T-cell (primary cell): ENCODE measurements at regions of chr15 and their contacts with region 1.

Region 1: DNA sequence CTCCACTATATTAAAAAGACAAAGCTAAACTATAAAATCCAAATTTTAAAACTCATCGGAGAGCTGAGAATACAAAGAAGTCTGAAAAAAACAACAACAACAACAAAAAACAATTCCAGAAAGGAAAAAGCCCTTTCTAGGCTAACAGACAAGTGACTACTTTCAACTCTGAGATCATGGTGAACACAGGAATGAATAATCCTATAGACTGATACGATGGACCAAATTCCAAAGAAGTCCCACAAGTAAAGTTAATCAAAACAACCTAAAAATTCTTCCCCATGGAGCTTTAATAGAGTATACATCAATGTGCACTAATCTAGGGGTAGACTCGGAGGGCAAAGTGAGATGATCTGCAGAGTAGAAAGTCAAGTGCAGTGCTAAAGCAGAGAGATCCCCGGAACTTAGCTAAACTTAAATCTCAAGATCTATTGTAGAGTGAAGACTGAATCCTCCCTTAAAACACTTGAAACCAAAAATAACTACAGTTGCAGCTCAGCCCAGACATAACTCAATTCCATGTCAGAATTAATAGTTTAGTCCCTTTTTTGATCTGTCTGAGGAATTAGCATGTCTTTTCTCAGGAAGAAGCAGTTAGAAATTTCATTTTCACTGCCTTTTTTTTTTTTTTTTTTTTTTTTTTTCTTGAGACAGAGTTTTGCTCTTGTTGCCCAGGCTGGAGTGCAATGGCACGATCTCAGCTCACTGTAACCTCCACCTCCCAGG is 43.5 kb downstream of the MYO9A start:
- DNase-seq: no peak
- ATAC-seq: no peak
- H3K4me3 ChIP-seq: no peak overlapping the region
- H3K4me3 Mint-ChIP-seq: no peak overlapping the region
- H3K27ac ChIP-seq: no peak overlapping the region
- H3K27ac Mint-ChIP-seq: no peak overlapping the region
- H3K4me1 ChIP-seq: no peaks in the 10 kb centered on the region
- H3K4me1 Mint-ChIP-seq: peaks cover 33 to 60% (median 39%) of the 10 kb centered on the region in 3 donors
- H3K27me3 ChIP-seq: no peaks in the 10 kb centered on the region
- H3K27me3 Mint-ChIP-seq: no peaks in the 10 kb centered on the region

Region 2: DNA sequence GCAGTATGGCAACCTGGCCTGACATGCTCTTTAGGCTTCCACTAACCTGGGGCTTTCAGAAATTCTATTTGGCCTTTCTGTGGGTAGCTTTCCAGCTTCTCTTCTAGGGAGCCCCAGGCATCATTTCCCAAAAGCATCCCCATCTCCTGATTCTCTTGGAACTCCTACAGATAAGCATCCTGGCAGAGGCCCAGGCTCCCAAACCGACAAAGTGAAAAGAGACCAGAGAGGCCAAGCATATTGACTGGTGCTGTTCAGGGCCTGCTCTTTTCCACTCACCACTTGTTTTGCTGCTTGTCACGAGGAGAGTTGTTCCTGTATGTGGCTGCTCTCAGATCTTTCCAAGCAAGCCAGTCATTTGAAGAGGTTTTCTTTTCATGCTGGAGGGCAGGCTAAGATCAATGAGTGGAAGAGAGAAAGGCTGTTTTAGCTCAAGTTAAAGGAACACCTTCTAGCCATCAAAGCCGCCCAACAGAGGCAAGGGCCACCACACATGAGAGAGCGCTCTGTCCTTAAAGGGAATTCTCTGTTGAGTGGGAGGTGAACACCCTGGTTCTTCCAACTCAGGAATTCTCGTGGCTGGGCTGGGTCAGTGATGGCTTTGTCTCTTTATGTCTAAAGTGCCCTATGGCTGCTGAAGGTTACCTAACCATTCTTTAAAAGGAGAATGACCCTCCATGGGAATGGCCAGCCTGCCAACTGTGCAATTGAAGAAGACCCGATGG is 295.3 kb before region 1 on chr15:
- CTCF ChIA-PET with region 1: interaction called in 1 of 2 experiments, 15 read pairs
- POLR2A ChIA-PET with region 1: no interaction called
- DNase-seq: no peak
- ATAC-seq: no peak
- H3K4me3 ChIP-seq: no peak overlapping the region
- H3K4me3 Mint-ChIP-seq: no peak overlapping the region
- H3K27ac ChIP-seq: no peak overlapping the region
- H3K27ac Mint-ChIP-seq: no peak overlapping the region
- H3K4me1 ChIP-seq: no peaks in the 10 kb centered on the region
- H3K4me1 Mint-ChIP-seq: peaks cover 0 to 6% (median 3%) of the 10 kb centered on the region in 3 donors
- H3K27me3 ChIP-seq: peaks cover 0 to 14% of the 10 kb centered on the region in 2 experiments
- H3K27me3 Mint-ChIP-seq: peaks cover 0 to 21% of the 10 kb centered on the region in 2 donors

Region 3: DNA sequence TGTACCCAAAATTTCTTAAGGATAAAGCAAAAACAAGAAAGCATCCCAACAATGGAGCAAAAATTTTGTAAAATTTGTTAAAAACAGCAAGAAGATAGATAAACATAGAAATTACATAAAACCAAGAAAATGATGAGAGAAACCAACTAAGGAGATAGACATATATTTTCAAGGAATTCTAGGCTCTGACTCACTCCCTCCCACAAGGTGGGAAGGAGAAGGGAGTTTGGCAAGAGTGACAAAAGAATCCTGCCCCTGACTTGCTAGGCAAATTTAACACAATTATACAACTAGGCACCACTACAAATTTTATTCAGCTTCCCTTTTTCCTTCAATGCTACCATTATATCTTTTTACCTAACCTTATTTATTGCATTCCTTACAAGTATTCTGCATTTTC is 27.5 kb before region 1 on chr15:
- CTCF ChIA-PET with region 1: no interaction called
- POLR2A ChIA-PET with region 1: no interaction called
- DNase-seq: no peak
- ATAC-seq: no peak
- H3K4me3 ChIP-seq: no peak overlapping the region
- H3K4me3 Mint-ChIP-seq: no peak overlapping the region
- H3K27ac ChIP-seq: no peak overlapping the region
- H3K27ac Mint-ChIP-seq: no peak overlapping the region
- H3K4me1 ChIP-seq: no peaks in the 10 kb centered on the region
- H3K4me1 Mint-ChIP-seq: peaks cover 12 to 21% (median 17%) of the 10 kb centered on the region in 3 donors
- H3K27me3 ChIP-seq: no peaks in the 10 kb centered on the region
- H3K27me3 Mint-ChIP-seq: no peaks in the 10 kb centered on the region